ENCODE measurements at regions of chr14 and their contacts with region 1.

Region 1: GRCh38 chr14:38290601-38291190 is 34.8 kb upstream of the CLEC14A start:
- DNase-seq: peak; percentile 99
- H3K4me3 ChIP-seq: peak overlapping the region in 1 of 3 experiments; percentile 34
- H3K27ac ChIP-seq: peak overlapping the region; percentile 99
- H3K4me1 ChIP-seq: peaks cover 44% of the 10 kb centered on the region
- H3K27me3 ChIP-seq: no peaks in the 10 kb centered on the region
- CTCF ChIP-seq: no peak
- POLR2A ChIP-seq: peak; percentile 74

Region 2: GRCh38 chr14:38208618-38209562 is 81.8 kb before region 1 on chr14:
- CTCF ChIA-PET with region 1: no interaction called
- POLR2A ChIA-PET with region 1: no interaction called
- dilution Hi-C with region 1: no loop called
- intact Hi-C with region 1: loop called (anchors 1 kb)
- DNase-seq: peak; percentile 47
- H3K4me3 ChIP-seq: peak overlapping the region; percentile 34 to 58 (median 44)
- H3K27ac ChIP-seq: no peak overlapping the region
- H3K4me1 ChIP-seq: peaks cover 36% of the 10 kb centered on the region
- H3K27me3 ChIP-seq: no peaks in the 10 kb centered on the region
- CTCF ChIP-seq: peak in 1 of 2 donors; percentile 48
- POLR2A ChIP-seq: no peak

Region 3: GRCh38 chr14:38233218-38233617 is 57.5 kb before region 1 on chr14:
- CTCF ChIA-PET with region 1: no interaction called
- POLR2A ChIA-PET with region 1: no interaction called
- dilution Hi-C with region 1: no loop called
- intact Hi-C with region 1: no loop called
- DNase-seq: no peak
- H3K4me3 ChIP-seq: no peak overlapping the region
- H3K27ac ChIP-seq: no peak overlapping the region
- H3K4me1 ChIP-seq: no peaks in the 10 kb centered on the region
- H3K27me3 ChIP-seq: no peaks in the 10 kb centered on the region
- CTCF ChIP-seq: no peak
- POLR2A ChIP-seq: no peak

Region 4: GRCh38 chr14:38357557-38357956 is 66.9 kb after region 1 on chr14:
- CTCF ChIA-PET with region 1: interaction called, 10 read pairs
- POLR2A ChIA-PET with region 1: interaction called, 5 read pairs
- dilution Hi-C with region 1: no loop called
- intact Hi-C with region 1: loop called (anchors 1 kb)
- DNase-seq: peak; percentile 97
- H3K4me3 ChIP-seq: peak overlapping the region in 1 of 3 experiments; percentile 19
- H3K27ac ChIP-seq: peak overlapping the region; percentile 76
- H3K4me1 ChIP-seq: peaks cover 36% of the 10 kb centered on the region
- H3K27me3 ChIP-seq: no peaks in the 10 kb centered on the region
- CTCF ChIP-seq: no peak
- POLR2A ChIP-seq: peak; percentile 78

Region 5: GRCh38 chr14:38405851-38406635 is 115.3 kb after region 1 on chr14:
- CTCF ChIA-PET with region 1: interaction called, 7 read pairs
- POLR2A ChIA-PET with region 1: interaction called, 3 read pairs
- dilution Hi-C with region 1: no loop called
- intact Hi-C with region 1: loop called (anchors 1 kb)
- DNase-seq: peak; percentile 54
- H3K4me3 ChIP-seq: no peak overlapping the region
- H3K27ac ChIP-seq: peak overlapping the region; percentile 69
- H3K4me1 ChIP-seq: peaks cover 53% of the 10 kb centered on the region
- H3K27me3 ChIP-seq: no peaks in the 10 kb centered on the region
- CTCF ChIP-seq: no peak
- POLR2A ChIP-seq: no peak

Region 6: DNA sequence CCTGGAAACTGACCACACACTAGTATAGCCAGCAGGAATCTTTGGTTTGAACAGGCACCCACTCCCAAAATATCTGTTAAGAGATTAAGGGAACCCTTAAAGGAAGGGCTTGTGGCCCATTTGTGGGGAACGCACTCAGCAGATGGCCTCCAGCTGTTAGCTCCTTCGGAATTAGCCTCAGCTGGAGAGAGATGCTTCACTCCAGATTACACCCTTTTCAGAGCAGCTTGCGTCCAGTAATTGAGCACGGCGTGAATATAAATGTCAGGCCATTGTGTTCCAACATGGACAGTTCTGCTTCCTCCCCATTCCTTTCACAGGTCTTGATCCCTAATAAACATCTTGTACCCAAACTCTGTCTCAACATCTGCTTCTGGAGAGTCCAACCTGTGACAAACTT is 414.5 kb after region 1 on chr14:
- CTCF ChIA-PET with region 1: no interaction called
- POLR2A ChIA-PET with region 1: no interaction called
- dilution Hi-C with region 1: no loop called
- intact Hi-C with region 1: no loop called
- DNase-seq: no peak
- H3K4me3 ChIP-seq: no peak overlapping the region
- H3K27ac ChIP-seq: no peak overlapping the region
- H3K4me1 ChIP-seq: no peaks in the 10 kb centered on the region
- H3K27me3 ChIP-seq: no peaks in the 10 kb centered on the region
- CTCF ChIP-seq: no peak
- POLR2A ChIP-seq: no peak

Region 7: DNA sequence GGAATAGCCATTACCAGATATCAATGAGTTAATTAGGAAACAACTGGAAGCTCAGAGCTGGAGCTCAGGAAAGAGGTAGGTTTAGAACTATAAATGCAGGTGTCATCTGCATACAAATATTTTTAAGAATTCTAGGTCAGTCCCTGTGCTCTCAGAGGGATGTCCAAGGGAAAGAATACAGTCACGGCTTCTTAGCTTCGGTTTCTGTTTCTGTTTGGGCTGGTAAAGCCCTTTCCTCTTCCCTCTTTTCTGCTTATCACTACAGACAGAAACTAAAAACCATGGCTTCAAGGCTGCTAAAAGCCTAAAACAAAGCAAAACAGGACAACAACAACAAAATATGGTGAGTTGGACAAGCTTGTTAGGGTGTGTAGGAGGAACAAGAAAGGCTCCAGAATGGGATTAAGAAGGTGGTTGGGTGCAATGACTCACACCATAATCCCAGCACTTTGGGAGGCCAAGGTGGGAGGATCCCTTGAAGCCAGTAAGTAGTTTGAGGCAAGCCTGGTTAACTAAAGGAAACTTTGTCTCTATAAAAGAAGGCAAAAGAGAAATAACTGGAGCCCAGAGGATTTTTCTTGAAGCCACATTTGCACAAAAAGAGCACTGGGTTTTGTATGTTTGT is 699.3 kb after region 1 on chr14:
- CTCF ChIA-PET with region 1: no interaction called
- POLR2A ChIA-PET with region 1: no interaction called
- dilution Hi-C with region 1: no loop called
- intact Hi-C with region 1: loop called (anchors 1 kb)
- DNase-seq: peak; percentile 15
- H3K4me3 ChIP-seq: no peak overlapping the region
- H3K27ac ChIP-seq: no peak overlapping the region
- H3K4me1 ChIP-seq: peaks cover 38% of the 10 kb centered on the region
- H3K27me3 ChIP-seq: no peaks in the 10 kb centered on the region
- CTCF ChIP-seq: no peak
- POLR2A ChIP-seq: no peak

Measured in endothelial cell of umbilical vein (primary cell).